ENCODE measurements at regions of chr16 and their contacts with region 1.

Region 1: GRCh38 chr16:67999985-68000384 is 701 bp upstream of the DPEP2 start:
- DNase-seq: no peak
- H3K4me3 ChIP-seq: peak overlapping the region in 1 of 2 donors; percentile 41
- H3K4me3 Mint-ChIP-seq: peak overlapping the region; percentile 84 to 96 (median 88)
- H3K27ac ChIP-seq: peak overlapping the region; percentile 60
- H3K27ac Mint-ChIP-seq: peak overlapping the region; percentile 84 to 99 (median 95)
- H3K4me1 ChIP-seq: peaks cover 80% of the 10 kb centered on the region
- H3K4me1 Mint-ChIP-seq: peaks cover 36 to 78% (median 54%) of the 10 kb centered on the region in 4 donors
- H3K27me3 ChIP-seq: no peaks in the 10 kb centered on the region
- H3K27me3 Mint-ChIP-seq: no peaks in the 10 kb centered on the region

Region 2: GRCh38 chr16:67598527-67598926 is 401.5 kb before region 1 on chr16:
- CTCF ChIA-PET with region 1: no interaction called
- POLR2A ChIA-PET with region 1: no interaction called
- intact Hi-C with region 1: no loop called
- DNase-seq: no peak
- H3K4me3 ChIP-seq: no peak overlapping the region
- H3K4me3 Mint-ChIP-seq: peak overlapping the region in 1 of 8 donors; percentile 48
- H3K27ac ChIP-seq: no peak overlapping the region
- H3K27ac Mint-ChIP-seq: peak overlapping the region in 4 of 7 donors; percentile 35 to 58 (median 43)
- H3K4me1 ChIP-seq: peaks cover 27% of the 10 kb centered on the region
- H3K4me1 Mint-ChIP-seq: peaks cover 33 to 78% (median 44%) of the 10 kb centered on the region in 4 donors
- H3K27me3 ChIP-seq: no peaks in the 10 kb centered on the region
- H3K27me3 Mint-ChIP-seq: no peaks in the 10 kb centered on the region

Region 3: GRCh38 chr16:67987460-67988160 is 12.4 kb before region 1 on chr16:
- CTCF ChIA-PET with region 1: interaction called, 9 read pairs
- POLR2A ChIA-PET with region 1: interaction called, 24 read pairs
- intact Hi-C with region 1: no loop called
- DNase-seq: no peak
- H3K4me3 ChIP-seq: no peak overlapping the region
- H3K4me3 Mint-ChIP-seq: no peak overlapping the region
- H3K27ac ChIP-seq: no peak overlapping the region
- H3K27ac Mint-ChIP-seq: peak overlapping the region; percentile 31 to 84 (median 68)
- H3K4me1 ChIP-seq: peaks cover 27% of the 10 kb centered on the region
- H3K4me1 Mint-ChIP-seq: peaks cover 13 to 35% (median 22%) of the 10 kb centered on the region in 4 donors
- H3K27me3 ChIP-seq: no peaks in the 10 kb centered on the region
- H3K27me3 Mint-ChIP-seq: no peaks in the 10 kb centered on the region

Region 4: GRCh38 chr16:68015396-68016105 is 15.6 kb after region 1 on chr16 and contains the start of gene DPEP2NB:
- CTCF ChIA-PET with region 1: interaction called, 3 read pairs
- POLR2A ChIA-PET with region 1: interaction called, 15 read pairs
- intact Hi-C with region 1: no loop called
- DNase-seq: no peak
- H3K4me3 ChIP-seq: no peak within 1 kb of the TSS
- H3K4me3 Mint-ChIP-seq: peak within 1 kb of the TSS in 1 of 8 donors; percentile 61
- H3K27ac ChIP-seq: no peak within 1 kb of the TSS
- H3K27ac Mint-ChIP-seq: peak within 1 kb of the TSS in 1 of 7 donors; percentile 0
- H3K4me1 ChIP-seq: no peaks in the 10 kb centered on the region
- H3K4me1 Mint-ChIP-seq: peaks cover 0 to 4% (median under 1%) of the 10 kb centered on the region in 4 donors
- H3K27me3 ChIP-seq: no peaks in the 10 kb centered on the region
- H3K27me3 Mint-ChIP-seq: no peaks in the 10 kb centered on the region
- total RNA-seq, gene DPEP2NB: not detected